Dorsolateral prefrontal cortex (tissue), 120 donors: ENCODE measurements at regions of chr13 and their contacts with region 1.

Region 1: DNA sequence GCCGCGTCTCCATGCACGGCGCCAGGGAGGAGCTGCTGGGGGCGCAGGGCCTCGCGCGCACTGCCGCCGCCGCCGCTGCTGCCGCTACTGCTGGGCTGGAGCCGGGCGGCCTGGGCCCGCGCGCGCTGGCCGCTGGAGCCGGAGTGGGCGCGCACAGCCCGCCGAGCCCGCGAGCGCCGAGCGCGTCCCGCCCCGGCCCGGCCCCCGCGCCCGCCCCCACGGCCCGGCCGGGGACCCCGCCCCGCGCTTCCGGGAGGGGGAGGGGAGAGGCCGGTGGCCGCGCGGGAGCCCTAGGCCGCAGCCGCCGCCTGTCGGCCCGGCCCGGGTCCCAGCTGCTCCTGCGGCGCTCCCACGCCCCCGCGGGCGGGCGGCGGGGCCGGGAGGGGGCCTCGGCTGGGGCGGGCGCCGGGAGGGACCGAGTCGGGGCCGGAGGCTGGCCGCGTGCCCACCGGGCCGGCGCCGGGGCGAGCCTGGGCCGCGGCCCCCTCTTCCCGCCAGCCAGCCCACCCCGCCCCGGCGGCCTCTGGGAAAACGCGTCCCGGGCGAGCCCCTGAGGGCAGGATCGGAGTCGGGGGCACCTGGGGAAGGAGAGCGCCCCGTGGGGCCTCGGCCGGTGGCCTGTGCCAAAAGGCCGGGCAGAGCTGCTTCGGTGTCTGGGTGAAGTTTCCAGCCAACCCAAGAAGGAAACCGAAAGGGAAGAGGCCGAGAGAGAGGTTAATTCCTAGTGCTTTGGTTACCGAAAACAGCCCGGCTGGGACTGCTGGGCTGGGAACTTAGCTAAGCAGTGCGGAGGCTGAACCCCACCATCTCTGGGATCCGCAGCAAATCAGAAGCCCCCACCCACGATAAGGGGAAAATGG is at the start of gene STK24:
- DNase-seq: peak in 5 of 10 donors; percentile 27 to 81 (median 48)
- H3K4me3 ChIP-seq: peak within 1 kb of the TSS; percentile 68 to 97 (median 87)
- H3K27ac ChIP-seq: peak within 1 kb of the TSS; percentile 55 to 98 (median 92)
- H3K27me3 ChIP-seq: no peaks in the 10 kb centered on the region
- CTCF ChIP-seq: no peak
- total RNA-seq, gene STK24: 28.8 to 87.6 (median 61.8) TPM

Region 2: DNA sequence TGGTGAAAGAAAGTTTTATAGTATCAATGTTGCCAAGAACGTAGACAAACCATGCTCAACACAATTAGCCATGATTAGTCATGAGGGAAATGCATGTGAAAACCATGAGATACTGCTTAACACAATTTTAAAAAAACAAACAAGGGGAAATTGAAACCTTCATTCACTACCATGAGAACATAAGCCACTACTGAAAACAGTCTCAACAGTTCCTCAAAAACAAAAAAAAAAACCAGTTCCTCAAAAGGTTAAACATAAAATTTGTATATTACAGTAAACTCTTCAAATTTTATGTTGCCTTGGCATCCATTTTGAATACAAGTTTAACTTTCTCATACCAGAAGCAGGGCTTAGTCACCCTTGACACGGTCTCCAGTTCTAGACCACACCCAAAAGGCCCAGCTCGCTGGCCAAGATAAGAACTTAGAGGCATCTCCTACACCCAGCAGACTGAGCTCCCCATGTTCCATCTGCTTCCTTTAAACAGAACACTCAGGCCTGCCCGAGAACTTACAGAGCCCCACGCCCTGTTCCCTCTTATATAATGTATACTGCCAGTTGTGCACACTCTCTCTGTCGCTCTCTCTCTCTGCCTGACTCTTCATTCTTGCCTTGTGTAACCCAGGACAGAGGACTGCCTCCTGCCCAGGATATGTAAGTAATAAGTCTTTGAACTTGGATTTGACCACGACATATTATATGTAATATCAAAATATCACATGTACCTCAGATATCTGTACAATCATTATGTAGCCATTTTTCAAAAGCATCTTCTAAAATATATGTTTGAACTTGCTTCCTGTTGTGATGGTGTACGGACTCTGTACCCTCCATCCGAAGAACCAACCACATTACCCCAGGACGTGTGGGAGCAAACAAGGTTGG is 67.7 kb before region 1 on chr13:
- intact Hi-C with region 1: loop called in 1 of 2 experiments (anchors 10 kb)
- DNase-seq: no peak
- H3K4me3 ChIP-seq: no peak overlapping the region
- H3K27ac ChIP-seq: peak overlapping the region in 41 of 59 donors; percentile 0 to 67 (median 35)
- H3K27me3 ChIP-seq: no peaks in the 10 kb centered on the region
- CTCF ChIP-seq: no peak

Region 3: GRCh38 chr13:98528663-98529570 is 48.3 kb before region 1 on chr13:
- intact Hi-C with region 1: no loop called
- DNase-seq: peak in 1 of 10 donors; percentile 68
- H3K4me3 ChIP-seq: no peak overlapping the region
- H3K27ac ChIP-seq: no peak overlapping the region
- H3K27me3 ChIP-seq: no peaks in the 10 kb centered on the region
- CTCF ChIP-seq: no peak

Region 4: GRCh38 chr13:98653463-98653985 is 76.3 kb after region 1 on chr13:
- intact Hi-C with region 1: loop called in 1 of 2 experiments (anchors 5 kb)
- DNase-seq: peak; percentile 51 to 83 (median 76)
- H3K4me3 ChIP-seq: peak overlapping the region in 3 of 59 donors; percentile 3 to 24 (median 5)
- H3K27ac ChIP-seq: no peak overlapping the region
- H3K27me3 ChIP-seq: no peaks in the 10 kb centered on the region
- CTCF ChIP-seq: peak; percentile 65 to 94 (median 88)

Region 5: GRCh38 chr13:98664039-98664438 is 86.8 kb after region 1 on chr13:
- intact Hi-C with region 1: no loop called
- DNase-seq: peak in 5 of 10 donors; percentile 24 to 67 (median 40)
- H3K4me3 ChIP-seq: no peak overlapping the region
- H3K27ac ChIP-seq: no peak overlapping the region
- H3K27me3 ChIP-seq: no peaks in the 10 kb centered on the region
- CTCF ChIP-seq: no peak

Region 6: DNA sequence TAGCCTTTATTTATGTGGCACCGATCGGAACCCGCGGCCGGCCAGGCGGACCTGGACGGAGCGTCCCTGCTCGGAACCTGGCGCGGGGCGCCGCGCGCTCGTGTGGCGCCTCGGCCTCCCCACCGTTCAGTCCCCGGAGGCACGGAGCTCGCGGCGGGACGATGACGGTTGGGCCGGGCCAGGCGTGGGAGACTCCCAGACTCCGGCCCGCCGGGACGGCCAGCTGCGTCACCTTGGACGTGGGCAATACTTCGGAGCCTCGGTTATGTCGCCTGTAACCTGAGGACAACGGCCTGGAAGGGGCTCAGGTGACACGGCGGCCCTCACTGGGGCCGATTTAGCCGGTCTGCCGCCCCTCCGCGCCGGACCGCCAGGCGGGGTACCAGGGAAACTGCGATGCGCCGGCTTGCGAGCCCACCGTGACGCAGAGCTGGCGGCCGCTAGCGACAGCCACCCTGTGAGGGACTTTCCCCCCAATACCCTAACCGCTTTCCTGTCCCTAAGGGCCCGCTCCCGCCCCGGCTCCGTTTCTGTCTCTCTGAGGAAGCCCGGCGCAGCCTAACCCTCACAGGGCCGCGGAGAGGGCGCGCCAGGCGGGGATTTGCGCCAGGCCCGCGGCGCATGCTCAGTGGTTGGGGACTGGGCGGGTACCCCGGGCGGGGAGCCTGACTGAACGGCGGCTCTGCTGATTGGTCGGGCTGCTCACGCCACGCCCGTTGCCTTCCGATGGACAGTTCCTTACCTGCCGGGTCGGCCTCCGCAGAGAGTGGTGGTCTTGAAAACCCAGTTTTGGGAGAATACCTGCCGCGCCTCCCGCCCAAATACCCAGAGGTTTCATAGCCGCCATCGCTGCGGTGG is 510.1 kb after region 1 on chr13:
- intact Hi-C with region 1: loop called in 1 of 2 experiments (anchors 10 kb)
- DNase-seq: peak; percentile 85 to 97 (median 91)
- H3K4me3 ChIP-seq: peak overlapping the region; percentile 45 to 97 (median 82)
- H3K27ac ChIP-seq: peak overlapping the region; percentile 35 to 99 (median 94)
- H3K27me3 ChIP-seq: no peaks in the 10 kb centered on the region
- CTCF ChIP-seq: peak in 48 of 56 donors; percentile 9 to 65 (median 34)